ENCODE measurements at regions of chr7 and their contacts with region 1.

Region 1: GRCh38 chr7:121081327-121081936 is 92.9 kb downstream of the CPED1 start:
- DNase-seq: no peak
- H3K4me3 Mint-ChIP-seq: no peak overlapping the region
- H3K27ac Mint-ChIP-seq: no peak overlapping the region
- H3K4me1 Mint-ChIP-seq: no peaks in the 10 kb centered on the region
- H3K27me3 Mint-ChIP-seq: peaks cover 13% of the 10 kb centered on the region

Region 2: GRCh38 chr7:120792091-120792860 is 289.2 kb before region 1 on chr7:
- intact Hi-C with region 1: loop called (anchors 1 kb)
- DNase-seq: peak; percentile 28
- H3K4me3 Mint-ChIP-seq: no peak overlapping the region
- H3K27ac Mint-ChIP-seq: no peak overlapping the region
- H3K4me1 Mint-ChIP-seq: no peaks in the 10 kb centered on the region
- H3K27me3 Mint-ChIP-seq: peaks cover 5% of the 10 kb centered on the region

Region 3: DNA sequence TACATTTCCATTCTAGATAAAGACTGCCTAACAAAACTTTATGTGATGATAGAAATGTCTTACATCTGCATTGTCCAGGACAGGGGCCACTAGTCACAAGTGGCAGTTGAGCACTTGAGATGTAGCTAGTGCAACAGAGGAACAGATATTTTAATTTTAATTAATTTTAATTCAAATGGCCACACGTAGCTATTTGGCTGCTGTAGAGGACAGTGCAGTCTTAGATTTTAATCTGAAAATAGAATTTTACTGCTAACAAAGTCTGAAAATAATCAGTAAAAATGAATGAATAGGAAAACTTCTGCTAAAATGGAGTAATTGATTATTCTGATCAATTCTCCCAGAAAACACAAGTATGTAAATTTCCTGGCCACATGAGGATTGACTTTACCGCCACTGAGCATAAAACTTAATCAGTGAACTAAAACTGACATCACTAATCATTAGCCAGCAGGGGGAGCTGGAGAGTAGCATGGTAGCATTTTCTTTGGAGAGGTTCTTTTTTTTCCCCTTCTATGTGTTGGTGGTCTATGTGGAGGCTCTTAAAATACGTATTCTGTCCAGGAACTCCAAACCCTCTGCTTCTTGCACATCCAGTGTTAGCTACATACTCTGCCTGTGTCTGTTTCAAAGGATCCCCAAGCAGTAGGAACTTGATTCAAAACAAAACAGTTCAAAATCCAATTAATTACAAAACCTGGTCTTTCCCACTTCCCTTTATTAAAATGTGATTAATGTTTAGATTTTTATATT is 275.6 kb before region 1 on chr7:
- intact Hi-C with region 1: loop called (anchors 1 kb)
- DNase-seq: peak; percentile 17
- H3K4me3 Mint-ChIP-seq: no peak overlapping the region
- H3K27ac Mint-ChIP-seq: no peak overlapping the region
- H3K4me1 Mint-ChIP-seq: no peaks in the 10 kb centered on the region
- H3K27me3 Mint-ChIP-seq: peaks cover 6% of the 10 kb centered on the region

Region 4: GRCh38 chr7:120857588-120858573 is 223.6 kb before region 1 on chr7 and contains the start of gene TSPAN12:
- intact Hi-C with region 1: loop called (anchors 1 kb)
- DNase-seq: peak; percentile 40
- H3K4me3 Mint-ChIP-seq: peak within 1 kb of the TSS; percentile 73
- H3K27ac Mint-ChIP-seq: no peak within 1 kb of the TSS
- H3K4me1 Mint-ChIP-seq: peaks cover 12% of the 10 kb centered on the region
- H3K27me3 Mint-ChIP-seq: peaks cover 67% of the 10 kb centered on the region
- total RNA-seq, gene TSPAN12: not detected in 2 replicates

Region 5: GRCh38 chr7:121167971-121168370 is 86.5 kb after region 1 on chr7:
- intact Hi-C with region 1: no loop called
- DNase-seq: no peak
- H3K4me3 Mint-ChIP-seq: no peak overlapping the region
- H3K27ac Mint-ChIP-seq: no peak overlapping the region
- H3K4me1 Mint-ChIP-seq: no peaks in the 10 kb centered on the region
- H3K27me3 Mint-ChIP-seq: peaks cover 9% of the 10 kb centered on the region

Region 6: GRCh38 chr7:121372376-121373010 is 291.1 kb after region 1 on chr7:
- intact Hi-C with region 1: no loop called
- DNase-seq: no peak
- H3K4me3 Mint-ChIP-seq: peak overlapping the region; percentile 38
- H3K27ac Mint-ChIP-seq: peak overlapping the region; percentile 80
- H3K4me1 Mint-ChIP-seq: peaks cover 76% of the 10 kb centered on the region
- H3K27me3 Mint-ChIP-seq: no peaks in the 10 kb centered on the region

Region 7: GRCh38 chr7:122515404-122515803 is 1434.0 kb after region 1 on chr7:
- intact Hi-C with region 1: loop called (anchors 5 kb)
- DNase-seq: no peak
- H3K4me3 Mint-ChIP-seq: no peak overlapping the region
- H3K27ac Mint-ChIP-seq: no peak overlapping the region
- H3K4me1 Mint-ChIP-seq: no peaks in the 10 kb centered on the region
- H3K27me3 Mint-ChIP-seq: no peaks in the 10 kb centered on the region

Measured in activated T-helper 1 cell treated with anti-CD3 and anti-CD28 coated beads, Interleukin-12 subunit alpha, Interleukin-12 subunit beta, Interleukin-2, Interleukin-4 antibody, amounts not matched to agents 30 ng/mL and 10 ng/mL and 1 ng/mL, durations not matched to agents 14 hours and 24 hours and 36 hours (primary cell).